PC-3 (cell line): ENCODE measurements at regions of chr9 and their contacts with region 1.

Region 1: DNA sequence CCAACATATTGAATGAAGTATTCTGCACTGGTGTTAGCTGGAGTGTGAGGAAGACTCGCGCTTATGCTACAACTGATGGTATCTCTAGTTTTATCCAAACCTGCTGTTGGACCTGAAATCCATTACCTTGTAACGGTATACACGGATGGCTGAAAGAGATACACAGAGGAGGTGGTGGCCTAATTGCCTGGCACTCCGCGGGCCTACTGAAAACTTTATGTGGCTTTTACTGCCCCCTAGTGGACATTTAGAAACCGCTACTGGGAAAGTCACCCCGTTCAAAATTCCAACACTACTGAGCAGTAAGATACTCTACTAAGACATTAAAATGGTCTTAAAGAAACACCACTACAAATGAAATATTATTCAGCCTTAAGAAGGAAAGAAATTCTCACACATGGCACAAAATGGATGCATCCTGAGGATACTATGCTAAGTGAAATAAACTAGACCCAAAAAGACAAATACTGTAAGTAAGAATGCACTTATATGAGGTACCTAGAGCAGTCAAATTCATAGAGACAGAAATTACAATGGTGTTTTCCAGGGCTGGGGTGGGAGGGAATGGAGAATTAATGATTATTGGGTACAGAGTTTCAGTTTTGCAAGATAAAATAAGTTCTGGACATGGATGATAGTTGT is 100.4 kb downstream of the TTLL11 start:
- DNase-seq: peak; percentile 78
- ATAC-seq: peak; percentile 94
- H3K4me3 ChIP-seq: no peak overlapping the region
- H3K27ac ChIP-seq: no peak overlapping the region
- H3K4me1 ChIP-seq: no peaks in the 10 kb centered on the region
- H3K27me3 ChIP-seq: no peaks in the 10 kb centered on the region
- CTCF ChIP-seq: peak; percentile 82

Region 2: DNA sequence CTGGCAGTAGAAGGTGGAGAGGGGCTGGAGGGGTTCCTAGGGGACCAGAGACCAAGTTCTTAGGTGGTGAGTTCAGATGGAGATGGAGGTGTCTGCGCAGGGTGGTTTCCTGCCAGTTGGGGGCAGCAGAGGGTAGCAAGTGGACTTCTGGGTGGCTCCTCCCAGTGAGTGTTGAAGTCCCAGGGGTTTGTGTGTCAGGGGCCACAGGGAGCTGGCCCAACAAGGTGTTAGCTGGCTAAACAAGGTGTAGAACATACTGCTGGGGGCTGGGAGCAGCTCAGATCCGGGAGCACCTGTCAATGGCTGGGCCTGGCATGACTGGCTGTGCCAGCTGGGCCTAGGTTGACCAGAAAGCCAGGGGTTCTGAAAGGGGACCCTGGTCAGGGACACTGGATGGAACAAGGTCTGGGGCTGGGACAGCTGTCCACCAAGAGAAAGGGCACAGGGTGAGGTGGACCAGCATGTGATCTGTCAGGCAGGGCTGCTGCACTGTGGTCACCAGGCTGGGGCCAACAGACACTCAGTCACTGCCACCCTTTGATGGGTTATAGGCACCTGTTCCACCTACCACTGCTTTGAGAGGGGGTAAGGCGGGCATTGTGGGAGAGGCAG is 305.7 kb before region 1 on chr9:
- CTCF ChIA-PET with region 1: no interaction called
- POLR2A ChIA-PET with region 1: no interaction called
- intact Hi-C with region 1: loop called (anchors 2 kb)
- DNase-seq: peak; percentile 71
- ATAC-seq: peak; percentile 78
- H3K4me3 ChIP-seq: no peak overlapping the region
- H3K27ac ChIP-seq: no peak overlapping the region
- H3K4me1 ChIP-seq: peaks cover 12% of the 10 kb centered on the region
- H3K27me3 ChIP-seq: no peaks in the 10 kb centered on the region
- CTCF ChIP-seq: peak; percentile 82

Region 3: GRCh38 chr9:121744002-121744686 is 248.5 kb before region 1 on chr9:
- CTCF ChIA-PET with region 1: no interaction called
- POLR2A ChIA-PET with region 1: no interaction called
- intact Hi-C with region 1: loop called (anchors 2 kb)
- DNase-seq: peak; percentile 60
- ATAC-seq: peak; percentile 75
- H3K4me3 ChIP-seq: peak overlapping the region; percentile 64
- H3K27ac ChIP-seq: 0 out of 2 replicates have a peak overlapping the region, but pooled peaks have one; percentile 5
- H3K4me1 ChIP-seq: peaks cover 13% of the 10 kb centered on the region
- H3K27me3 ChIP-seq: no peaks in the 10 kb centered on the region
- CTCF ChIP-seq: peak; percentile 67

Region 4: DNA sequence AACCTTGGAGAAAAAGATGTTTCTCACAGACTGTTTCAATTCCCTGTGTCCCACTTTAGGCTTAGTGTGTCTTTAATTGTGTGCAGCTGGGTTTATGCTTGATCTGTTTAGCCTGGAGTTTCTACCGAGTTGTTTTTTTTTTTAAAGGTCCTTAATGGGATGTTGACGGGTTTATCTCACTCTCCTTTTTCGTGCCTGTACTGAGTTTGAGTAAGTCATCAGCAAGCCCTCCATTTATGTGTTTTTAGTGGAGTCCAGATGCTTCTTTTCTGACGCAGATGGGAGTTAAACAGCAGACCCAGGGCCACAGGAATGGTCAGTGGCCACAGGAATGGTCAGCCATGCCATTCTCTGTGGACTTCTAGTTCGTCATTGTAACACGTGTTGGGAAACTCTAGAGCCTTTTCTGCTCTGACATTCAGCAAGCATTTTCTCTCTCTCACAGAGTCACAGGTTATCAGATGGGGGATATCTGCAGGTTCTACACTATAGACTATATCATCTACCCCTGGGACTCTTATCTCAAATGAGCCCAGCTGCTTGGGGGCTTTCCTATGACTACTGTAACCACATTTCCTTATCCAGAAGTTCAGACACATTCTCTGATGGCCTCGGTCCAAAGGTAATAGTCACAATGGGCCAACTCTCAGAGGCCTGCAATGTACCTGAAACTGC is 90.1 kb before region 1 on chr9:
- CTCF ChIA-PET with region 1: no interaction called
- POLR2A ChIA-PET with region 1: no interaction called
- intact Hi-C with region 1: loop called (anchors 10 kb)
- DNase-seq: no peak
- ATAC-seq: no peak
- H3K4me3 ChIP-seq: no peak overlapping the region
- H3K27ac ChIP-seq: no peak overlapping the region
- H3K4me1 ChIP-seq: no peaks in the 10 kb centered on the region
- H3K27me3 ChIP-seq: no peaks in the 10 kb centered on the region
- CTCF ChIP-seq: no peak

Region 5: GRCh38 chr9:121935739-121936138 is 57.0 kb before region 1 on chr9:
- CTCF ChIA-PET with region 1: no interaction called
- POLR2A ChIA-PET with region 1: no interaction called
- intact Hi-C with region 1: loop called (anchors 5 kb)
- DNase-seq: no peak
- ATAC-seq: no peak
- H3K4me3 ChIP-seq: no peak overlapping the region
- H3K27ac ChIP-seq: no peak overlapping the region
- H3K4me1 ChIP-seq: no peaks in the 10 kb centered on the region
- H3K27me3 ChIP-seq: no peaks in the 10 kb centered on the region
- CTCF ChIP-seq: no peak

Region 6: GRCh38 chr9:122065923-122066629 is 73.4 kb after region 1 on chr9:
- CTCF ChIA-PET with region 1: no interaction called
- POLR2A ChIA-PET with region 1: no interaction called
- intact Hi-C with region 1: no loop called
- DNase-seq: no peak
- ATAC-seq: no peak
- H3K4me3 ChIP-seq: no peak overlapping the region
- H3K27ac ChIP-seq: no peak overlapping the region
- H3K4me1 ChIP-seq: no peaks in the 10 kb centered on the region
- H3K27me3 ChIP-seq: no peaks in the 10 kb centered on the region
- CTCF ChIP-seq: no peak